ENCODE measurements at regions of chr9 and their contacts with region 1.

Region 1: DNA sequence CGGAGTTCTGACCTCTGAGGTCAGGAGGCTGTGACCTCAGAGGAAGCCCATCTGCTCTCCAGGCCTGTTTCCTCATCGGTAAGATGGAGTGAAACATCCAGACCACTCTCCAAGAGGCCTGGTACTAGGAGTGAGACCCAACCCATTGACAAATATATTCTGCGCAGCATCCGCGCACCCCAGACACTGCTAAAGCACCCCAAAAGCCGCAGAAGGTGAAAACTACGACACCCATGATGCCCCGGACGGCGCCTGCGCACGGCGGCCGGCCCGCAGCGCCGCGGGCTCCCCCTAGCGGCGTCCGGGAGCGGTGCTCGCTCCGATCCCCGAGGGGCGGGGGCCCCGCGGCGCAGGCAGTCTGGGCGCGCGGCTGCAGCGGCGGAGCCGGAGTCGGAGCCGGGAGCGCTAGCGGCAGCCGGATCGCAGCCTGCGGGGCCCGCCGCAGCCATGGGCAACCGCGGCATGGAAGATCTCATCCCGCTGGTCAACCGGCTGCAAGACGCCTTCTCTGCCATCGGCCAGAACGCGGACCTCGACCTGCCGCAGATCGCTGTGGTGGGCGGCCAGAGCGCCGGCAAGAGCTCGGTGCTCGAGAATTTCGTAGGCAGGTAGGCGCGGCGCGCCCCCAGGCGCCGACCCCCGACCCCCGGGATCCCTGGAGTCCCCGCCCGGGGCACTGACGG is at the start of gene DNM1:
- DNase-seq: peak; percentile 72
- ATAC-seq: peak; percentile 83
- H3K4me3 ChIP-seq: peak within 1 kb of the TSS; percentile 81
- H3K27ac ChIP-seq: no peak within 1 kb of the TSS
- H3K4me1 ChIP-seq: peaks cover 5% of the 10 kb centered on the region; the same call in 1 of the 2 replicates
- H3K27me3 ChIP-seq: no peaks in the 10 kb centered on the region
- CTCF ChIP-seq: peak; percentile 53
- total RNA-seq, gene DNM1: 24.1 and 36.4 TPM in 2 replicates

Region 2: GRCh38 chr9:128094166-128094967 is 108.8 kb before region 1 on chr9:
- CTCF ChIA-PET with region 1: no interaction called
- POLR2A ChIA-PET with region 1: interaction called, 15 read pairs
- intact Hi-C with region 1: no loop called
- DNase-seq: peak; percentile 96
- ATAC-seq: peak; percentile 75
- H3K4me3 ChIP-seq: peak overlapping the region; percentile 59
- H3K27ac ChIP-seq: peak overlapping the region; percentile 90
- H3K4me1 ChIP-seq: peaks cover 40% of the 10 kb centered on the region
- H3K27me3 ChIP-seq: no peaks in the 10 kb centered on the region
- CTCF ChIP-seq: no peak

Region 3: GRCh38 chr9:128249908-128250838 is 47.0 kb after region 1 on chr9:
- CTCF ChIA-PET with region 1: no interaction called
- POLR2A ChIA-PET with region 1: interaction called, 11 read pairs
- intact Hi-C with region 1: loop called (anchors 10 kb)
- DNase-seq: peak; percentile 57
- ATAC-seq: peak; percentile 83
- H3K4me3 ChIP-seq: no peak overlapping the region
- H3K27ac ChIP-seq: no peak overlapping the region
- H3K4me1 ChIP-seq: no peaks in the 10 kb centered on the region
- H3K27me3 ChIP-seq: no peaks in the 10 kb centered on the region
- CTCF ChIP-seq: no peak

Region 4: GRCh38 chr9:128275996-128276573 is 72.9 kb after region 1 on chr9 and contains the starts of genes GOLGA2 and SWI5:
- CTCF ChIA-PET with region 1: no interaction called
- POLR2A ChIA-PET with region 1: no interaction called
- intact Hi-C with region 1: loop called (anchors 5 kb)
- DNase-seq: peak; percentile 98
- ATAC-seq: peak; percentile 90
- H3K4me3 ChIP-seq: peak within 1 kb of the TSS; percentile 99
- H3K27ac ChIP-seq: peak within 1 kb of the TSS; percentile 43
- H3K4me1 ChIP-seq: peaks cover 23% of the 10 kb centered on the region
- H3K27me3 ChIP-seq: no peaks in the 10 kb centered on the region
- CTCF ChIP-seq: no peak
- total RNA-seq, gene GOLGA2: 60.5 and 86.1 TPM in 2 replicates
- total RNA-seq, gene SWI5: 63.1 and 66.8 TPM in 2 replicates

Measured in PC-3 (cell line).